Common myeloid progenitor, CD34-positive (primary cell): ENCODE measurements at regions of chr11 and their contacts with region 1.

Region 1: GRCh38 chr11:118051611-118052461 is 25.0 kb upstream of the TMPRSS4 start:
- DNase-seq: peak in 2 of 3 donors; percentile 35 to 43
- H3K4me3 ChIP-seq: no peak overlapping the region
- H3K27ac ChIP-seq: no peak overlapping the region
- H3K4me1 ChIP-seq: peaks cover 0 to 28% (median 6%) of the 10 kb centered on the region in 4 experiments
- H3K27me3 ChIP-seq: no peaks in the 10 kb centered on the region

Region 2: GRCh38 chr11:117828611-117829368 is 223.0 kb before region 1 on chr11:
- CTCF ChIA-PET with region 1: interaction called, 115 read pairs
- POLR2A ChIA-PET with region 1: no interaction called
- DNase-seq: peak; percentile 85 to 97 (median 96)
- H3K4me3 ChIP-seq: peak overlapping the region in 3 of 7 experiments; percentile 10 to 23 (median 22)
- H3K27ac ChIP-seq: peak overlapping the region in 1 of 2 experiments; percentile 34
- H3K4me1 ChIP-seq: peaks cover 0 to 73% (median 58%) of the 10 kb centered on the region in 4 experiments
- H3K27me3 ChIP-seq: no peaks in the 10 kb centered on the region

Region 3: GRCh38 chr11:117843666-117844484 is 208.0 kb before region 1 on chr11:
- CTCF ChIA-PET with region 1: interaction called, 40 read pairs
- POLR2A ChIA-PET with region 1: no interaction called
- DNase-seq: peak; percentile 59 to 80 (median 73)
- H3K4me3 ChIP-seq: no peak overlapping the region
- H3K27ac ChIP-seq: no peak overlapping the region
- H3K4me1 ChIP-seq: peaks cover 0 to 18% (median 14%) of the 10 kb centered on the region in 4 experiments
- H3K27me3 ChIP-seq: no peaks in the 10 kb centered on the region

Region 4: GRCh38 chr11:117986981-117987574 is 64.8 kb before region 1 on chr11:
- CTCF ChIA-PET with region 1: interaction called, 10 read pairs
- POLR2A ChIA-PET with region 1: interaction called, 5 read pairs
- DNase-seq: peak in 2 of 3 donors; percentile 54 to 56
- H3K4me3 ChIP-seq: peak overlapping the region in 6 of 7 experiments; percentile 52 to 76 (median 68)
- H3K27ac ChIP-seq: peak overlapping the region in 1 of 2 experiments; percentile 59
- H3K4me1 ChIP-seq: peaks cover 0 to 22% (median 16%) of the 10 kb centered on the region in 4 experiments
- H3K27me3 ChIP-seq: peaks cover 0 to 7% (median 2%) of the 10 kb centered on the region in 5 experiments

Region 5: DNA sequence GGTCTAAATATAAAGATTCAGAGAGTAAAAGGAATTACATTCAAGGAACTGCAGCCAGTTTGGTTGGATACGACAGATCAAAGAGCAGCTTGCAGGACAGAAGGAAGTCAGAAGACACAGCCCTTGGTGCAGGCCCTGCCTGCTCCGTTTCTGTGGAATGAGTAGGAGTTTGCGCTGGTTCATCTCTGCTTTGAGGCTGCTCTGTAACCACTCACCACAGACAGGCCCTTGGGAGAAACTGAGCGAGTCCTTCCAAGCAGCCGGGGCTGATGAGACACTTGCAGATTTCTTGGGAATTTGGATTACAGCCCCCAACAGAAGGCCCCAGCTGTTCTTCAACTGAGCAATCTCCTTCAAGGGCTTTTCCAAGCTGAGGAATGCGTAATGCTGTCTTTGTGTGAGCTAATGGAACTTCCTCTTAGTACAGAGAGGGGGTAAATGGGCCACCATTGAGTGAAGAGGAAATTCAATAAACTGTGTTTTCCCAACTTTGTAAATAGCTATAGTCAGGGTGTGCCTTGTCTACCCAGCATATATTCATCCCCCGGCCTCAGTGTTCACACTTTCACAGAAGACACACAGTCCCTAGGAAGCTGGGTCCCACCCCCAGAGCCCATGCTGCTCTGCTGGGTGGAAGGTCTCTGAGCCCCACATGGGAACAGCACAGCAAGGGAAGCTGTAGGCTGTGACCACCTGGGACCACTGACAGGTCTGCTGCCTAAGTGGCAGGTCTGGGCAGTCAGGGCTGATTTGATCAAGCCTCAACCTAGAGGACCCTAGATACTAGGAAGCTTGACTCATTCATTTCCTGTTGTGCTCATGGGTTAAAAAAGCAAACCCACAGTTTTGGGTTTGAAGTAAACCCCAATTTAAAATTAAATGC is 49.1 kb before region 1 on chr11:
- CTCF ChIA-PET with region 1: no interaction called
- POLR2A ChIA-PET with region 1: no interaction called
- DNase-seq: peak in 2 of 3 donors; percentile 50 to 70
- H3K4me3 ChIP-seq: peak overlapping the region in 1 of 7 experiments; percentile 36
- H3K27ac ChIP-seq: peak overlapping the region in 1 of 2 experiments; percentile 70
- H3K4me1 ChIP-seq: peaks cover 5 to 52% (median 36%) of the 10 kb centered on the region in 4 experiments
- H3K27me3 ChIP-seq: no peaks in the 10 kb centered on the region

Region 6: GRCh38 chr11:118071416-118072030 is 19.7 kb after region 1 on chr11:
- CTCF ChIA-PET with region 1: no interaction called
- POLR2A ChIA-PET with region 1: no interaction called
- DNase-seq: no peak
- H3K4me3 ChIP-seq: no peak overlapping the region
- H3K27ac ChIP-seq: no peak overlapping the region
- H3K4me1 ChIP-seq: peaks cover 0 to 5% (median 0%) of the 10 kb centered on the region in 4 experiments
- H3K27me3 ChIP-seq: no peaks in the 10 kb centered on the region